Mammary epithelial cell (primary cell): ENCODE measurements at regions of chr3 and their contacts with region 1.

Region 1: DNA sequence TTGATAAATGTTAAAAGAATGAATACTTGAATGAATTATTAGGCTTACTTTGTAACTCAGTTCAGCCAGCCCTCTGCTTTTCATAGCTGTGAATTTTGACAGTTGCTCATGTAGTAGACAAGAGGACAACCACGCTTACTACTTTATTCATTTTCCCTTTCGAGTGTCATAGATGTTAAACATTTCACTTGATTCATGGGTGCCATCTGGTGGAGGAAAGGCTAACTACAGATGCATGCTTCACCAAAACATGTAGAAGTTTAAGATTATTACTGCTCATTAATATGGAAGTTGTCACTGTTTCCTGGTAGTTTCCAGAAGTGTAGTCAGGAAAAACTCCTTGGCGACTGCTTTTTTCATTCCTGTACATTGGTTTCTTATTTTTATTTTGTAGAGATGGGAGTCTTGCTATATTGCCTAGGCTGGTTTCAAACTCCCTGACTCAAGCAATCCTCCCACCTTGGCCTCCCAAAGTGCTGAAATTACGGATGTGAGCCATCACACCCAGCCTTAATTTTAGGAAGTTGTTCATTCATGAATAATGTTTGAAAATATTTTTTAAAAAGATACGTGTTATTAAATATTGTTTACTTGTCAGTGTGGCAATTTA is 163.2 kb downstream of the B3GALNT1 start:
- DNase-seq: peak; percentile 45
- H3K4me3 ChIP-seq: no peak overlapping the region
- H3K27ac ChIP-seq: no peak overlapping the region
- H3K4me1 ChIP-seq: no peaks in the 10 kb centered on the region
- H3K27me3 ChIP-seq: no peaks in the 10 kb centered on the region
- CTCF ChIP-seq: peak; percentile 81 to 82

Region 2: GRCh38 chr3:160577556-160578195 is 364.3 kb before region 1 on chr3:
- CTCF ChIA-PET with region 1: no interaction called
- dilution Hi-C with region 1: no loop called
- in situ Hi-C with region 1: loop called (anchors 25 kb)
- intact Hi-C with region 1: loop called (anchors 2 kb)
- DNase-seq: peak; percentile 38
- H3K4me3 ChIP-seq: no peak overlapping the region
- H3K27ac ChIP-seq: no peak overlapping the region
- H3K4me1 ChIP-seq: no peaks in the 10 kb centered on the region
- H3K27me3 ChIP-seq: no peaks in the 10 kb centered on the region
- CTCF ChIP-seq: peak; percentile 40 to 43

Region 3: GRCh38 chr3:161449787-161450186 is 507.8 kb after region 1 on chr3:
- CTCF ChIA-PET with region 1: no interaction called
- dilution Hi-C with region 1: no loop called
- in situ Hi-C with region 1: loop called in 1 of 2 experiments (anchors 25 kb)
- intact Hi-C with region 1: no loop called
- DNase-seq: no peak
- H3K4me3 ChIP-seq: no peak overlapping the region
- H3K27ac ChIP-seq: no peak overlapping the region
- H3K4me1 ChIP-seq: no peaks in the 10 kb centered on the region
- H3K27me3 ChIP-seq: no peaks in the 10 kb centered on the region
- CTCF ChIP-seq: peak in 1 of 2 donors; percentile 13